GM23248 (cell line): ENCODE measurements at regions of chr11 and their contacts with region 1.

Region 1: DNA sequence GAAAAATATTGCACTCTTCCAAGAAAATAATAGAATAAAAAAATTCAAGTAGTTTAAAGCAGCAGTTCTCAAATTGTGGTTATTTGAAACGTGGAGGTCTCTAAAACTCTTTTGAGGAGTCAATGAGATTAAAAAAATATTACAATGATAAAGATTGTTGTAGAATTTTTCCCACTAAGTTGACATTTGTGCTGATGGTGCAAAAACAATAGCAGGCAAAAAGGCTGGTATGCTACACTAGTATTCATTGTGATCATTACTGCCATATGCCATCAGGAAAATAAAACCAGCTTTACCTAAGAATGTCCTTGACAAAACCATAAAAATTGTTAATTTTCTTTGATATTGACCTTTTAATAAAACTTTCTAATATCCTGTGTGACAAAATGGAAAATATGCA is 505.2 kb upstream of the ANO5 start:
- DNase-seq: no peak
- H3K4me3 ChIP-seq: no peak overlapping the region
- H3K27ac ChIP-seq: no peak overlapping the region
- H3K4me1 ChIP-seq: no peaks in the 10 kb centered on the region
- H3K27me3 ChIP-seq: no peaks in the 10 kb centered on the region

Region 2: GRCh38 chr11:21169639-21170038 is 518.0 kb before region 1 on chr11:
- in situ Hi-C with region 1: no loop called
- DNase-seq: no peak
- H3K4me3 ChIP-seq: no peak overlapping the region
- H3K27ac ChIP-seq: no peak overlapping the region
- H3K4me1 ChIP-seq: no peaks in the 10 kb centered on the region
- H3K27me3 ChIP-seq: no peaks in the 10 kb centered on the region

Region 3: GRCh38 chr11:21736404-21736803 is 48.8 kb after region 1 on chr11:
- in situ Hi-C with region 1: loop called (anchors 10 kb)
- DNase-seq: no peak
- H3K4me3 ChIP-seq: no peak overlapping the region
- H3K27ac ChIP-seq: no peak overlapping the region
- H3K4me1 ChIP-seq: no peaks in the 10 kb centered on the region
- H3K27me3 ChIP-seq: no peaks in the 10 kb centered on the region